CD4-positive, alpha-beta T cell (primary cell): ENCODE measurements at regions of chr2 and their contacts with region 1.

Region 1: GRCh38 chr2:30421604-30422443 is 25.2 kb upstream of the LCLAT1 start:
- DNase-seq: peak in 8 of 14 experiments; percentile 10 to 63 (median 19)
- ATAC-seq: peak; percentile 47
- H3K4me3 ChIP-seq: no peak overlapping the region
- H3K4me3 Mint-ChIP-seq: peak overlapping the region; percentile 43
- H3K27ac ChIP-seq: peak overlapping the region; percentile 48 to 51
- H3K27ac Mint-ChIP-seq: peak overlapping the region; percentile 82
- H3K4me1 ChIP-seq: peaks cover 30% of the 10 kb centered on the region
- H3K4me1 Mint-ChIP-seq: peaks cover 42% of the 10 kb centered on the region
- H3K27me3 ChIP-seq: no peaks in the 10 kb centered on the region
- H3K27me3 Mint-ChIP-seq: no peaks in the 10 kb centered on the region
- CTCF ChIP-seq: no peak

Region 2: DNA sequence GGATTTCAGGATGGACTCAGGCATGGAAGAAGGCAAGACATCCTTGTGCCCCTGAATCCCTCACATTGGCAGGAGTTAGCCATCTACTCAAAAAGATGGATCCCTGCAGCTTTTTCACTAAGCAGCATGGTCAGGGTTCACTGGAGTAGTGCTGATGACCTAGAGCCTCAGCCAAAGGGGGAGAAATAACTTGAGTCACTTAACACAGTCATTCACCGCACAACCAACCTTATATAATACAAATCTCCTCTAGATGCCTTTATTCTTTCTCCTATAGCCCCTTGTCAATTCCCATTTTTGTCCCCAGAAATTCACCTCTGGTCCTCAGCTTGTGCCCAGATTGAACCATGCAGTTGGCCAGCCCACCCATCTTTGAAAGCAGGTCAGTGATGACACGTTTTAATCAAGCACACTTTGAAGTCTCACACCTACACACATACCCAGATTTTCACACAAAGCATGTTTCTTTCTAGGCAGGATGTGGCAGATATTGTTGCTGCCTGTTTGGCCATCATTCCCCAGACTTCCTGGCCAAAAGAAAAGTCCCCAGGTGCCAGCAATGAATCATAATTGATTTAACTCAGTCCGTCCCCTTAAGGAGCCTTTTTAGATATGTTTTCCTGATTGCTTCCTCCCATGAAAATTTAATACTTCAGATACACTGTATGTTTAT is 106.3 kb before region 1 on chr2:
- CTCF ChIA-PET with region 1: no interaction called
- POLR2A ChIA-PET with region 1: no interaction called
- intact Hi-C with region 1: loop called in 1 of 2 experiments (anchors 5 kb)
- DNase-seq: peak in 5 of 14 experiments; percentile 27 to 82 (median 53)
- ATAC-seq: peak; percentile 80
- H3K4me3 ChIP-seq: no peak overlapping the region
- H3K4me3 Mint-ChIP-seq: peak overlapping the region; percentile 62
- H3K27ac ChIP-seq: peak overlapping the region; percentile 13 to 51
- H3K27ac Mint-ChIP-seq: peak overlapping the region; percentile 77
- H3K4me1 ChIP-seq: peaks cover 26% of the 10 kb centered on the region
- H3K4me1 Mint-ChIP-seq: peaks cover 56% of the 10 kb centered on the region
- H3K27me3 ChIP-seq: no peaks in the 10 kb centered on the region
- H3K27me3 Mint-ChIP-seq: no peaks in the 10 kb centered on the region
- CTCF ChIP-seq: no peak

Region 3: DNA sequence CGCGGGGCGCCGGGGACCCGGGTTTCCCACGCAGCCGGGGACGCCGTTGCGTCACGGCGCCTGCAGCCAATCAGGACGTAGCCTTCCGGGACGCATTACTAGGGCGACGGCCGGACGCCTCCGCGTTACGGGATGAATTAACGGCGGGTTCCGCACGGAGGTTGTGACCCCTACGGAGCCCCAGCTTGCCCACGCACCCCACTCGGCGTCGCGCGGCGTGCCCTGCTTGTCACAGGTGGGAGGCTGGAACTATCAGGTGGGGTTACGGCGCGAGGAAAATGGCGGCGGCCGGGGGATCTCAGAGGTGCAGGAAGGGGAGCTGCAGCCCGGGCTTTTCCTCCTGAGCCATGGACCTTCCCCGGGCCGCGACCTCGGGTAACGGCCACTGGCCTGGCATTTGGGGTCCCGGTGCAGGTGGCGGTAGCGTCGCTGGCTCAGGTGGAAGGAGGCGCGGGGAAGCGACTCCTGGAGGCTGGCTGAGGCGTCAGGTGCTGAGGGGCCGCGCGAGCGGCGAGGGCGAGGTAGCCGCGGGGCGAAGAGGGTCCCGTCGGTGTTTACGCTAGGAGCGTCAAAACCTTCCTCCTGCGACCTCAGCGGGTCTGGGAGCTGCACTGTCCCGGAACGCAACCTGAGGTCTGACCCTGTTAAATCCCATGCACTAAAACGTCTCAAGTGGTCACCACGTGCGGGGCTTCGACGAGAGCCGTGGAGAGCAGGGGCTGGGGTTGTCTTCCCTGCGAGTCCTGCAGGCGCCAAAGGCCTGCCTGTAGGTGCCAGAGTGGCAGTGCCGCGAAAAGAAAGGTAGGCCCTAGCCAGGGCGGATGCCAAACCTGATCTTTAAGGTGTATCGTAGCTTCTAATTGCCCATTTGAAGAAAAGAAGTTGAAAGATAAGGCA is 25.6 kb after region 1 on chr2 and contains the start of gene LCLAT1:
- CTCF ChIA-PET with region 1: interaction called, 3 read pairs
- POLR2A ChIA-PET with region 1: interaction called, 29 read pairs
- intact Hi-C with region 1: loop called in 1 of 2 experiments (anchors 1 kb)
- DNase-seq: peak; percentile 68 to 94 (median 78)
- ATAC-seq: peak; percentile 84
- H3K4me3 ChIP-seq: peak within 1 kb of the TSS; percentile 82
- H3K4me3 Mint-ChIP-seq: peak within 1 kb of the TSS; percentile 99
- H3K27ac ChIP-seq: peak within 1 kb of the TSS; percentile 81 to 85
- H3K27ac Mint-ChIP-seq: peak within 1 kb of the TSS; percentile 99
- H3K4me1 ChIP-seq: peaks cover 14% of the 10 kb centered on the region
- H3K4me1 Mint-ChIP-seq: peaks cover 54% of the 10 kb centered on the region
- H3K27me3 ChIP-seq: no peaks in the 10 kb centered on the region
- H3K27me3 Mint-ChIP-seq: no peaks in the 10 kb centered on the region
- CTCF ChIP-seq: no peak
- total RNA-seq, gene LCLAT1: 8.3 to 10.2 TPM

Region 4: GRCh38 chr2:30464544-30465170 is 42.8 kb after region 1 on chr2:
- CTCF ChIA-PET with region 1: no interaction called
- POLR2A ChIA-PET with region 1: no interaction called
- intact Hi-C with region 1: loop called in 1 of 2 experiments (anchors 5 kb)
- DNase-seq: no peak
- ATAC-seq: no peak
- H3K4me3 ChIP-seq: no peak overlapping the region
- H3K4me3 Mint-ChIP-seq: peak overlapping the region; percentile 53
- H3K27ac ChIP-seq: no peak overlapping the region
- H3K27ac Mint-ChIP-seq: peak overlapping the region; percentile 47
- H3K4me1 ChIP-seq: peaks cover 2% of the 10 kb centered on the region
- H3K4me1 Mint-ChIP-seq: peaks cover 50% of the 10 kb centered on the region
- H3K27me3 ChIP-seq: no peaks in the 10 kb centered on the region
- H3K27me3 Mint-ChIP-seq: no peaks in the 10 kb centered on the region
- CTCF ChIP-seq: no peak